Endothelial cell of umbilical vein (primary cell): ENCODE measurements at regions of chr13 and their contacts with region 1.

Region 1: GRCh38 chr13:69959041-69959440 is 148.6 kb upstream of the ATXN8OS start:
- DNase-seq: no peak
- H3K4me3 ChIP-seq: no peak overlapping the region
- H3K27ac ChIP-seq: no peak overlapping the region
- H3K4me1 ChIP-seq: no peaks in the 10 kb centered on the region
- H3K27me3 ChIP-seq: no peaks in the 10 kb centered on the region
- CTCF ChIP-seq: no peak
- POLR2A ChIP-seq: no peak

Region 2: DNA sequence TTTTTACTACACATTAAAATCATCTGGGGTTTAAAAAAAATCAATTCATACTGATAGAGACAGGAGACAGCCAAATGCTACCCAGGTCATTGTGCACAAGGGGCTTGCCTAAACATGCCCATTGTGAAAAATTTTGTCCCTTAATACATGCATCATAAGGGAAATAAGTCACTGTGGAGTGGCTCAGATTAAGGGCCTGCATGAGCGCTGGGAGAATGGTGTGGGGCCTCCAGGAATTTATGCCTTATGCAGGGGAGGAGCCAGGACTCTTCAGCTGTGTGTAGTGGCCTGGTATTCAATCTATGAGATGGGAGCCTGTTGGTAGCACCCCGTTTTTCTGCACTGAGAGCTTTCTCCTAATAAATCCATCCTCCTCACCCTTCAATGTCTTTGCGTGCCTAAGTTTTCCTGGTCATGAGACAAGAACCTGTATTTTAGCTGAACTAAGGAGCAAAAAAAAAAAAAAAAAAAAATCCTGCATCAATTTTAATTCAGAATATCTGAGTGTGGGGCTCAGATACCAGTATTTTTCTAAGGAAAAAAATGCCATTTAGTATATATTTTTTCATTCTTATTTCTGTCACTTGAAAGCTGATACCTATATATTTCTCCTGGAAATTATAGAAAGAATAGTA is 849.0 kb before region 1 on chr13:
- CTCF ChIA-PET with region 1: no interaction called
- POLR2A ChIA-PET with region 1: no interaction called
- dilution Hi-C with region 1: no loop called
- intact Hi-C with region 1: no loop called
- DNase-seq: no peak
- H3K4me3 ChIP-seq: no peak overlapping the region
- H3K27ac ChIP-seq: no peak overlapping the region
- H3K4me1 ChIP-seq: no peaks in the 10 kb centered on the region
- H3K27me3 ChIP-seq: no peaks in the 10 kb centered on the region
- CTCF ChIP-seq: no peak
- POLR2A ChIP-seq: no peak

Region 3: DNA sequence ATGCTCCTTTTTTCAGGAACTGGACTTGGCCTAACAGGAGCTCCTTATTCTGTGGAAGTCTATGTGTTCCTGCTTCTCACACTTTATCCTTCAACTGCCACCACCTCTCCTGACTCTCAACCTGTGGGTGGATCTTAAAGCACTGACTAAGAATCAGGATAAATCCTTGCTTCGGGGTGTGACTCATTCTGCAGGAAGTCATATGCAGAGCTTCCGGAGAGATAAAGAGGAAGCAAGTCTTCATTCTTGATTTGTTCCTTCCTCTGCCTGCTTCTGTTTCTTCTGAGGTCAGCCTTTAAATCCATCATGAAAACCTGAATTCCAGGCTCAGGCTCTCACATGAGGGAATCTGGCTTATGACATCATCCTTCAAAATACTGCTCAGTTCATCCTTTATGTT is 11.5 kb after region 1 on chr13:
- CTCF ChIA-PET with region 1: no interaction called
- POLR2A ChIA-PET with region 1: no interaction called
- dilution Hi-C with region 1: no loop called
- intact Hi-C with region 1: loop called (anchors 1 kb)
- DNase-seq: peak; percentile 82
- H3K4me3 ChIP-seq: no peak overlapping the region
- H3K27ac ChIP-seq: peak overlapping the region; percentile 87
- H3K4me1 ChIP-seq: peaks cover 19% of the 10 kb centered on the region
- H3K27me3 ChIP-seq: no peaks in the 10 kb centered on the region
- CTCF ChIP-seq: no peak
- POLR2A ChIP-seq: no peak